AG04449 (cell line): ENCODE measurements at regions of chr2 and their contacts with region 1.

Region 1: DNA sequence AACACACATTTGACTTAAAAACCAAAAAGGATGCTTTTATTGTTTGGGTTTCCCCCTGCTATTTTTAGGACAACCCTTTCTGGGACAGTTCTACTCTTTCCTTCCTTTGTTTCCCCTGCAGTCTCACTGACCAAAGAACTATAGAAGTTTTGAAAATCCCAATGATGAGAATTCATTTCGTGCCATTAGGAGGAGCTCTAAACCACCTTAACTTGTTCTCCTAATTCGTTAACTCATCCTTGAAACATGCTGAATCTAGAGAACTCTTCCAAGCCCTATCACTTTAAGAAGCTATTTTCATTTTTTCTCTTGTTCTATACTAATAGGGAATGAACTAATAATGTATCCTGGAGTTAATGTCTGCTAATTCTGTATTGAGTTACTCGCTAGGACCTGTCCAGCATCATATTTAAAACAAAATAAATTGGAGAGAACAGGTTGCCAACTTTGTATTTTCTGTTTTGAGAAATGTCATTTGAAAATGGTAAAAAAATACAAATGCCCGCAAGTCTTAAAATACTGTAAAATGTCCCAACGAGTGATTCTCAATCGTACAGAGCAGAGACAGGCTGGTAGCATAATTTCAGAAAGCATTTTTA is 62.9 kb downstream of the AFTPH start:
- DNase-seq: peak; percentile 17
- H3K4me3 ChIP-seq: no peak overlapping the region
- CTCF ChIP-seq: peak; percentile 62

Region 2: DNA sequence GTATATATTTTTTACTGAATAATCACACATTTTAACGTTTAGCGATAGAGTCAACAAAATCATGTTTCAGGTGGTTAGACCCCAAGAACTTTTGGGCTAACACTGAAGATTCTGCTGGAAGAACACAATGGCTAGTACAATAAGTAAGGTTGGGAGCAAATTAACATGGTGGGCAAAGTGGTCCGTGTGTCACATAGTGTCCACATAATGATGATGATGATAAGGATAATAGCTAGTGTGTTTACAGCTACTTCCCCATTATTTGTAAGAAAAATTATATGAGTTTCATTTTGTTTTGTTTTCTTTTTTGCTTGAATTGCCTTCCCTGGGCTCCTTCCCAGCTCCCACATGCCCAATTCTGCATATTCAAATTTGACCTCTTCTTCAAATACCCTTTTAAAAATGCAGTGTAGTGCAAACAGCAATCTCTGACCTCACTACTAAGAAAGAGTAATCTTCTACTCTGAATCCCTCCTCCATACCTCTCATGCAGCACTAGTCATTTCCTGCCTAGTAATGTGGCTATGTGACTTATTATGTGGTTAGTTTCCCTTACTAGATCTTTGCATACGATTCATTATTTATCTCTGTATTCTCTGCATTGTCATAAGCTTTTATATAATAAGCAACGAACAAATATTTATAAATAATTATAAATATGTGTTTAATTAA is 550.8 kb before region 1 on chr2:
- CTCF ChIA-PET with region 1: no interaction called
- POLR2A ChIA-PET with region 1: no interaction called
- DNase-seq: no peak
- H3K4me3 ChIP-seq: no peak overlapping the region
- CTCF ChIP-seq: no peak

Region 3: GRCh38 chr2:64574871-64575270 is 12.1 kb before region 1 on chr2:
- CTCF ChIA-PET with region 1: interaction called, 15 read pairs
- POLR2A ChIA-PET with region 1: no interaction called
- DNase-seq: no peak
- H3K4me3 ChIP-seq: no peak overlapping the region
- CTCF ChIP-seq: no peak

Region 4: GRCh38 chr2:64622443-64623241 is 35.7 kb after region 1 on chr2:
- CTCF ChIA-PET with region 1: interaction called, 10 read pairs
- POLR2A ChIA-PET with region 1: no interaction called
- DNase-seq: no peak
- H3K4me3 ChIP-seq: no peak overlapping the region
- CTCF ChIP-seq: peak; percentile 29

Region 5: DNA sequence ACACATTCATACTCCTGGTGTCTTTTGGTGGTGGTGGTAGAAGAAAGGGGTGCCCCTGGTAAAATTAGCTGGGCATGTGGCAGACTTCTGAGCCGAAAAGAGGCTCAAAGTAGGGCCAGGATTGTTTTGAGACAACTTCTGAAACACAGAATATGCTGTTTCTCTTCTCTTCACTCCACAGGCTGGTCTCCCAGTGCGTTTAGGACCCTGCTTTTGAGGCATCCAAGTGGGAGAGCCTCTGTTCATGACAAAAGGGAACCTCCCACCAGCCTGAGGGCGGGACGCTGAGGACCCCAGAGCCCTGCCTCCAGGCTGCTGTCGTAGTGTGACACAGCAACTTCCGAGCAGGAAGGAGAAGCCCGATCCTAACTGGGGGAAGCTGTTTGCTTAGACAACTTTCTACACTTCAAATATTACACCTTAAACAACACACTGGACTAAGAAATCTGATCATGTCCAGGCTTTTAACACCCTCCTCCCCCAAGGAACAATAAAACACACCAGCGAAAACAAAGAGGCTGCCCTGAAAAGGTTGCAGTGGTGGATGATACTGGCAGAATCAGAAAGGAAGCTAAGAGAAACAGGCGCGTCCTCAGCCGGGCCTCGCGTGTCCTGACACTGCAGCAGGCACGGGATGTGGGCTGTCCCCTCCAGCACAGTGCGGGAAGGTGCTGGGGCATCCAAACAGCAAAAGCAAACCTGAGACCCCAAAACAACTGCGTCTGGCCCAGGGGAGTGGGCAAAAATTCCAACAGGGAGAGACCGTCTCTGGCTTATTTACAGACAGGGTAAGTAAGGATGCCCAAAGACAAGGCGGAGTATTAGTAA is 57.4 kb after region 1 on chr2:
- CTCF ChIA-PET with region 1: interaction called, 44 read pairs
- POLR2A ChIA-PET with region 1: no interaction called
- DNase-seq: no peak
- H3K4me3 ChIP-seq: peak overlapping the region; percentile 57
- CTCF ChIP-seq: no peak

Region 6: DNA sequence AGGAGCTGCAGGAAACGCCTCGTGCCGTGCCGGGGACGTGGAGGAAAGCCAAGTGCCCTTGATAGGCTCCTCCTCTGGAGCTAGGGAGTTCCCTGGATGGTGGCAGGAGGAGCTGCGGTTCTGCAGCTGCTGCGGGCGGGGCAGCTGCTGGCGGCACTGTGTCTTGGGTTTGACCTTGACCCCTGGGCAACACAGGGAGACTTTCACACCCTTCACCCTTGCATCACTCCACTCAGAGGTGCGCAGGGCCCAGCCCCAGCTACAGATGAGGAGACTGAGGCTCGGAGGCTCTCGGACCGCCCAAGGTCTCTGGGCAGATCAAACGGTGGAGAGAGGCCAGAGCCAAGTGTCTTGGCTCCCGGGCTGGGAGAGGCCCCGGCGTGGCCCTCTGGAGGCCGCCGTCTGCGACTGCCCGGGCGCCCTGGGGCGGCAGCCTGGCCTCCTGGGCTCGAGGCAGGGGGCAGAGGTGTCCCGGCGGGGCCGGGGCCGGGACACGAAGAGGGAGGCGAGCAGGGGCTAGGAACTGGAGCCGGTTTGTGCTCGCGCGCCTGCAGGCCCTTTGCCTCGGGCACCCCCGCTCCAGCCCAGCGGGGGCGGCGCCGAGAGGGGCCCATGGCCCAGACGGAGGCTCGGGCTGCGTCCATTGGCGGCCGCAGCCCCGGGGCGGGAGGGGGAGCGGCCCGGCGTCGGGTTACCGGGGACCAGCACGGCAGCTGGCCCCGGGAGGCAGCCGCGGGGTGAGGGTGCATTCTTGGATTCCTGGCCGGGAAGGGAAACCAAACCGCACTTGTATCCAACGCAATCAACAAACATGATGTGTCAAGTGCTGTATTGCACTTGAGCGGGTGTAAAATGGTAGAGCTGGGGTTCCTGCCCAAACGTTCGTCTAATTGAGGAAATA is 272.6 kb after region 1 on chr2:
- CTCF ChIA-PET with region 1: interaction called, 33 read pairs
- POLR2A ChIA-PET with region 1: no interaction called
- DNase-seq: peak; percentile 80
- H3K4me3 ChIP-seq: peak overlapping the region; percentile 42
- CTCF ChIP-seq: no peak

Region 7: DNA sequence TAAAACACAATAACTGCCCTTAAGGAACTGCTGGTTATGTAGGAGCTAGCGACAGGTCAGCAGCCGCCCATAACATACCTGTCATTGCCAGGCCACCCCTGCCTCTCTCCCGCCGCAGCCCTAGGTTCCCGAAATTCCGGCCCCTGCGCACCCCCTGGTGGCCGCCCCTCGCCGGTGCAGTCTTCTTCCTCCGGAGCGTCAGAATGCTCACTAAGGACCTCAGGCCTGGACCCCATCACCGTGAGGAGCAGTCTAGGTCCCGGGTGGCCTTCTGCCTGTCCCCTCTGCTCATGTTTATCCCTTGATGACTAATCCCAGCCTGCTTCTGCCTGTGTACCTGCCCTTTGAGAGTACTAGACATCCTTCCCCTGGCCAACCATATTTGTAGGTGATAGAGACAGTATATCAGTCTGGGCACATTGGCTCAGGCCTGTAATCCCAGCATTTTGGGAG is 286.5 kb after region 1 on chr2:
- CTCF ChIA-PET with region 1: interaction called, 91 read pairs
- POLR2A ChIA-PET with region 1: no interaction called
- DNase-seq: no peak
- H3K4me3 ChIP-seq: no peak overlapping the region; the same call in 1 of the 2 replicates
- CTCF ChIP-seq: peak; percentile 97

Region 8: DNA sequence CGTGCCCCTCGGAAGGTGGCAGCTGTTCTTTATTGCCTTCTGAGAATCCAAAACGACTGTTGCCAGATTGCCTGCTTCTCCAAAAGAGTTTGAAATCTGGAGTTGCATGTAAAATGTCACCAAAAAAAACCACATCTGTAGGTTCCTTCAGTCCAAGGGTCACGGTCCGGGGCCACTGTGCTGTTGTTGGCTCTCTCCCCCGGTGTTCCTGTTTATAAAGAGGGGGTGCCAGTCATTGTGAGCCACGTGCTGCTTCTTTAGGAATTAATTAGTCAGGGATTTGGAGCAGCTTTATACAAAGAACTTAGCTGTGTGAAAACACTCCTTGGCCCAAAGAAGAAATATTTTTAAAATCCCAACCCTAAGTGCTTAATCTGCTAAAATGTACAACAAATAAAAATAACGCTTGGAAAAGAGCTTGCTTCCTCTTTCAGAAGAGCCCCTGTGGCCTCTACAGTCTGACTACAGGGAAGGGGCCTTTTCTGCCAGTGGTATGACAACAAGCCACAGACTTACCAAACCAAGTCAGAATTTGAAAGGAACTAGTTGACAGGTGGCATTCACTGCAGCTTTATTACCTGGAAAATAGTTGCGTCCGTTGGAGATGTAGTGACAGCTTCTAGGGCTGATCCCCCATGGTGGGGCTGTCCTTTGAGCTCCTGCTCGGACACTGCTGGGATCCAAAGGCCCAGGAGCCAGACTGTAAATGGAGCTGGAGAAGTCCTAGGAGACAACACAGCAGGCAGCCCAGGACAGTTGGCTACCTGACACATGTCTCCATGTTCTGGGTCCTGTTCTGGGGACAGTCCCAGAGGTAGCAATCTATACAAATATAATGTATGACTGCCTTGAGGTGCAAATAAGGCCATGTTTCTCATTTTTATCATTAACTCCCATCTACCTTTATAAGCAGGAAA is 317.7 kb after region 1 on chr2:
- CTCF ChIA-PET with region 1: interaction called, 11 read pairs
- POLR2A ChIA-PET with region 1: no interaction called
- DNase-seq: no peak
- H3K4me3 ChIP-seq: no peak overlapping the region
- CTCF ChIP-seq: no peak

Region 9: DNA sequence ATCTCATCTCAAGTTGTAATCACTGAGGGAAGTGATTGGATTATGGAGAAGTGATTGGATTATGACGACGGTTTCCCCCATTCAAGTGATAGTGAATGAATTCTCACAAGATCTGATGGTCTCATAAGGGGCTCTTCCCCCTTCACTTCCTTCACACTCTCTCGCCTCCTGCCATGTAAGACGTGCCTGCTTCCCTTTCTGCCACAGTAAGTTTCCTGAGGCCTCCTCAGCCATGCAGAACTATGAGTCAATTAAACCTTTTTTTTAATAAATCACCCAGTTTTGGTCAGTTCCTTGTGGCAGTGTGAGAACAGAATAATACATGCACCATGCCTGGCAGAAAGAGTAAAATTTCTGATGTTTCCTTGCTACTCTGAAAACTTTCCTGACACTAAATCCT is 505.8 kb after region 1 on chr2:
- CTCF ChIA-PET with region 1: no interaction called
- POLR2A ChIA-PET with region 1: no interaction called
- DNase-seq: no peak
- H3K4me3 ChIP-seq: no peak overlapping the region
- CTCF ChIP-seq: no peak